SK-N-SH (cell line): ENCODE measurements at regions of chr15 and their contacts with region 1.

Region 1: GRCh38 chr15:66700802-66701421 is 1.1 kb upstream of the SMAD6 start:
- DNase-seq: peak; percentile 98
- H3K4me3 ChIP-seq: peak overlapping the region; percentile 68 to 73
- H3K27ac ChIP-seq: peak overlapping the region; percentile 89
- H3K4me1 ChIP-seq: peaks cover 23 to 24% of the 10 kb centered on the region in 2 experiments; a peak in 3 of 4 replicates
- H3K27me3 ChIP-seq: no peaks in the 10 kb centered on the region
- CTCF ChIP-seq: no peak
- EP300 ChIP-seq: peak in 1 of 2 experiments; percentile 24; a peak in 1 of 4 replicates
- RAD21 ChIP-seq: no peak

Region 2: GRCh38 chr15:66611257-66612053 is 89.5 kb before region 1 on chr15:
- CTCF ChIA-PET with region 1: interaction called, 172 read pairs
- POLR2A ChIA-PET with region 1: no interaction called
- DNase-seq: no peak
- H3K4me3 ChIP-seq: no peak overlapping the region
- H3K27ac ChIP-seq: no peak overlapping the region
- H3K4me1 ChIP-seq: peaks cover 0 to 2% of the 10 kb centered on the region in 2 experiments; a peak in 1 of 4 replicates
- H3K27me3 ChIP-seq: no peaks in the 10 kb centered on the region
- CTCF ChIP-seq: no peak
- EP300 ChIP-seq: no peak
- RAD21 ChIP-seq: no peak

Region 3: GRCh38 chr15:66630801-66631351 is 70.0 kb before region 1 on chr15:
- CTCF ChIA-PET with region 1: interaction called, 12 read pairs
- POLR2A ChIA-PET with region 1: interaction called, 3 read pairs
- DNase-seq: peak; percentile 76
- H3K4me3 ChIP-seq: no peak overlapping the region
- H3K27ac ChIP-seq: peak overlapping the region in 1 of 2 experiments; percentile 94; a peak in 2 of 4 replicates
- H3K4me1 ChIP-seq: peaks cover 0 to 41% of the 10 kb centered on the region in 2 experiments; a peak in 2 of 4 replicates
- H3K27me3 ChIP-seq: no peaks in the 10 kb centered on the region
- CTCF ChIP-seq: no peak
- EP300 ChIP-seq: no peak
- RAD21 ChIP-seq: no peak

Region 4: GRCh38 chr15:66679657-66680108 is 21.2 kb before region 1 on chr15:
- CTCF ChIA-PET with region 1: interaction called, 53 read pairs
- POLR2A ChIA-PET with region 1: no interaction called
- DNase-seq: peak; percentile 88
- H3K4me3 ChIP-seq: no peak overlapping the region
- H3K27ac ChIP-seq: peak overlapping the region; percentile 32 to 95
- H3K4me1 ChIP-seq: peaks cover 7 to 22% of the 10 kb centered on the region in 2 experiments; a peak in 3 of 4 replicates
- H3K27me3 ChIP-seq: no peaks in the 10 kb centered on the region
- CTCF ChIP-seq: no peak
- EP300 ChIP-seq: peak in 1 of 2 experiments; percentile 50; a peak in 1 of 4 replicates
- RAD21 ChIP-seq: peak; percentile 43

Region 5: GRCh38 chr15:66774001-66774814 is 73.3 kb after region 1 on chr15:
- CTCF ChIA-PET with region 1: interaction called, 84 read pairs
- POLR2A ChIA-PET with region 1: no interaction called
- DNase-seq: peak; percentile 95
- H3K4me3 ChIP-seq: peak overlapping the region in 1 of 2 experiments; percentile 19; a peak in 1 of 4 replicates
- H3K27ac ChIP-seq: peak overlapping the region; percentile 62 to 81
- H3K4me1 ChIP-seq: peaks cover 31 to 50% of the 10 kb centered on the region in 2 experiments
- H3K27me3 ChIP-seq: no peaks in the 10 kb centered on the region
- CTCF ChIP-seq: peak; percentile 92
- EP300 ChIP-seq: no peak
- RAD21 ChIP-seq: peak; percentile 92